ENCODE measurements at regions of chr20 and their contacts with region 1.

Region 1: GRCh38 chr20:63309261-63310071 is 16.5 kb downstream of the COL20A1 start:
- DNase-seq: no peak
- ATAC-seq: no peak
- H3K4me3 ChIP-seq: no peak overlapping the region
- H3K27ac ChIP-seq: no peak overlapping the region
- H3K4me1 ChIP-seq: no peaks in the 10 kb centered on the region
- H3K27me3 ChIP-seq: peaks cover 36 to 48% (median 39%) of the 10 kb centered on the region in 3 donors
- CTCF ChIP-seq: peak; percentile 31 to 86 (median 76)
- POLR2A ChIP-seq: no peak

Region 2: GRCh38 chr20:63156221-63156671 is 153.2 kb before region 1 on chr20:
- in situ Hi-C with region 1: no loop called
- intact Hi-C with region 1: no loop called
- DNase-seq: no peak
- ATAC-seq: no peak
- H3K4me3 ChIP-seq: no peak overlapping the region
- H3K27ac ChIP-seq: no peak overlapping the region
- H3K4me1 ChIP-seq: peaks cover 0 to 13% of the 10 kb centered on the region in 2 donors
- H3K27me3 ChIP-seq: peaks cover 45 to 53% (median 52%) of the 10 kb centered on the region in 3 donors
- CTCF ChIP-seq: no peak
- POLR2A ChIP-seq: no peak

Region 3: DNA sequence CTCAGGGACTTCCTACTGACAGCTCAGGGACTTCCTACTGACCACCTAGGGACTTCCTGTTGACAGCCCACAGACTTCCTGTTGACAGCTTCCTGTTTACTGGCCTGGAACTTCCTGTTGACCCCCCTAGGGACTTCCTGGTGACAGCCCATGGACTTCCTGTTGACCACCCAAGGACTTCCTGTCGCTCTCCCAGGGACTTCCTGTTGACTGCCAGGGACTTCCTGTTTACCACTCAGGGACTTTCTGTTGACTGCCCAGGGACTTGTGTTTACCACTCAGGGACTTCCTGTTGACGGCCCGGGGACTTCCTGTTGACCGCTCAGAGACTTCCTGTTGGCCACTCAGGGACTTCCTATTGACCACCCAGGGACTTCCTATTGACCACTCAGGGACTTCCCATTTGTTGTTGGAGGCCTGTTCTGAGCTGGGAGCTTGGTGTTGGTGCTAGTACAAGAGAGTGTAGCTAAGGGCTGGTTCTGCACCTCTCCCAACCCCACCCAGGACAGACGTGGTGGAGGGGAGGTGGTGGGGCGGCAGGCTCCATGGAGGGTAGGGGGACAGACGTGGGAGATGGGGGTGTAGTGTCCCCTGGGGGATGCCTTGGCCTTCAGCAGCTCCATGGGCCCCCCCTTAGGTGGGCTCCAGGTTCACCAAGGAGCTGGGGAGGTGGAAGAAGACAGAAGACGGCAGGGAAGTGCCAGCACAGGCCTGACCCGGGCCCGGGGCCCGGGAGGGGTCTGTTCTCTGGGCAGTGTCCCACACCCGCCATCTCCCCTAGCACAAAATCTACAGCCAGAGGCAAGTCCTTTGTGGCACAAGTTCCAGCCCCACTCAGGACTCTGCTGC is 17.7 kb after region 1 on chr20:
- in situ Hi-C with region 1: no loop called
- intact Hi-C with region 1: no loop called
- DNase-seq: no peak
- ATAC-seq: no peak
- H3K4me3 ChIP-seq: no peak overlapping the region
- H3K27ac ChIP-seq: no peak overlapping the region
- H3K4me1 ChIP-seq: no peaks in the 10 kb centered on the region
- H3K27me3 ChIP-seq: peaks cover 16 to 17% (median 17%) of the 10 kb centered on the region in 3 donors
- CTCF ChIP-seq: no peak
- POLR2A ChIP-seq: no peak

Region 4: DNA sequence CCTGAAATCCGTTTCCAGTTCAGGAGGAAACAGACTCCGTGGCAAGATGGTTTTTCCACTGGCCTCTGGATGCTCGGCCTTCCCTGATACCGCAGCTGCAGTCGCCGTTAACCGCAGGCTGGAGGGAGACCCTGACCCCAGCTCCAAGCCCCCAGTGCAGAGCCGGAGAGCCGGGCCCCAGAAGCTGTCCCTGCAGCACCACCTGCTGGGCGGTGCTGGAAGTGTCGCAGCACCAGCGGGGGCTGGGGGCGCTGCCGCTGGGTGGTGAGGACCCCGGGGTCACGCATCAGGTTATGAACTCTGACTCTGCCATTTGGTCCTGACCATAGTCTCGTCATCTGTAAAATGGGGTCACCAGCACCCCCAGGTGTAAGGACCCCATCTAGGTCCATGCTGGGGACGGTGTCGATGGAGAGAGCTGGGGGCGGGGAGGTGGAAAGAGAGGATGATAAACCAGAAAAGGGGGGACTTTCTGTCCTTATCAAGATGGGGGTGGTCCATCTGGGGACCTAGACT is 72.4 kb after region 1 on chr20:
- in situ Hi-C with region 1: no loop called
- intact Hi-C with region 1: loop called (anchors 2 kb)
- DNase-seq: no peak
- ATAC-seq: no peak
- H3K4me3 ChIP-seq: no peak overlapping the region
- H3K27ac ChIP-seq: no peak overlapping the region
- H3K4me1 ChIP-seq: no peaks in the 10 kb centered on the region
- H3K27me3 ChIP-seq: peaks cover 31 to 53% (median 33%) of the 10 kb centered on the region in 3 donors
- CTCF ChIP-seq: peak; percentile 51 to 85 (median 78)
- POLR2A ChIP-seq: no peak